ENCODE measurements at regions of chr2 and their contacts with region 1.

Region 1: GRCh38 chr2:215931256-215931903 is 82.0 kb downstream of the MREG start:
- DNase-seq: peak; percentile 74
- ATAC-seq: peak; percentile 77
- H3K4me3 Mint-ChIP-seq: no peak overlapping the region
- H3K27ac Mint-ChIP-seq: no peak overlapping the region
- H3K4me1 Mint-ChIP-seq: peaks cover 9% of the 10 kb centered on the region
- H3K27me3 Mint-ChIP-seq: peaks cover 3% of the 10 kb centered on the region

Region 2: GRCh38 chr2:215454519-215455246 is 476.7 kb before region 1 on chr2:
- CTCF ChIA-PET with region 1: interaction called, 6 read pairs
- POLR2A ChIA-PET with region 1: no interaction called
- intact Hi-C with region 1: loop called in 1 of 2 experiments (anchors 2 kb)
- DNase-seq: no peak
- ATAC-seq: peak; percentile 51
- H3K4me3 Mint-ChIP-seq: no peak overlapping the region
- H3K27ac Mint-ChIP-seq: no peak overlapping the region
- H3K4me1 Mint-ChIP-seq: no peaks in the 10 kb centered on the region
- H3K27me3 Mint-ChIP-seq: peaks cover 18% of the 10 kb centered on the region

Region 3: DNA sequence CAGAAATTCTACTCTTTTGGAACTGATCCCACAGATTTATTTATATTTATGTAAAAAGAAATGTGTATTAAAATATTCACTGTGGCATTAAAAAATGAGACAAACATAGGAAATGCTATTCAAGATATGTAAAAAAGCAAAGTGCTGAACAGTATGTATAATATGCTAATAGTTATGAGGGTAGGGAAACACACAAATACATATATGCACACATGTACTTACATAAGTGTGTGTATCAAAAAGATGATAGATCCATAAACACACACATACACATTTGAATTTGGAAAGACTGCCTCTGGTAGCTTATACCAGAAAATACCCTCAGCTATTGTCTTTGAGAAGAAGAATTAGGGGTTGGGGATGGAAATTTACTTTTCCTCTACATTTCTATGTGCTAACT is 21.2 kb before region 1 on chr2:
- CTCF ChIA-PET with region 1: interaction called, 13 read pairs
- POLR2A ChIA-PET with region 1: no interaction called
- intact Hi-C with region 1: no loop called
- DNase-seq: no peak
- ATAC-seq: no peak
- H3K4me3 Mint-ChIP-seq: no peak overlapping the region
- H3K27ac Mint-ChIP-seq: no peak overlapping the region
- H3K4me1 Mint-ChIP-seq: no peaks in the 10 kb centered on the region
- H3K27me3 Mint-ChIP-seq: peaks cover 9% of the 10 kb centered on the region

Region 4: DNA sequence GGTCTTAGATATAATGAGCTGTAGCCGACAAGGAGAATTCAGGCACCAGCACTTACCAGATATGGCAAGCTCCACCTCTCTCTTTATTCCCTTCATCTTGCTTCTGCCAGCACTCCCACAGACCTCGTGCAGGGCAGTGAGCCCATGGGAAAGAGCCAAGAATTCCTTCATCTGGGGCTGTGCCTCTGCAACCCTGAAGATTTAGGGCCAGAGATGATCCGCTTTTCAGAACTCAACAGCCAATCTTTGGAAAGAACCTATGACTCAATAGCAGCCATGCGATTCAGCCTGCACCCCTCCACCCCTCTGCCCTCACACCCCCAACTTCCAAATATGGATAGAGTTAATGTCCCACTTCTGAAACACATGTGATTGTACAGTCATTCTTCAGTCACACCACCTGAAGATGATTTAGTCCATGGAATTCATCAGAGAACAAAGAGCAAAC is 1462.2 kb after region 1 on chr2:
- CTCF ChIA-PET with region 1: no interaction called
- POLR2A ChIA-PET with region 1: no interaction called
- intact Hi-C with region 1: no loop called
- DNase-seq: no peak
- ATAC-seq: no peak
- H3K4me3 Mint-ChIP-seq: no peak overlapping the region
- H3K27ac Mint-ChIP-seq: no peak overlapping the region
- H3K4me1 Mint-ChIP-seq: peaks cover 4% of the 10 kb centered on the region
- H3K27me3 Mint-ChIP-seq: no peaks in the 10 kb centered on the region